Right cardiac atrium (tissue), 5 donors: ENCODE measurements at regions of chr17 and their contacts with region 1.

Region 1: GRCh38 chr17:79658811-79659207 is 48.0 kb upstream of the RBFOX3 start:
- DNase-seq: no peak
- ATAC-seq: peak in 1 of 2 donors; percentile 59
- H3K4me3 ChIP-seq: no peak overlapping the region
- H3K27ac ChIP-seq: no peak overlapping the region
- H3K4me1 ChIP-seq: no peaks in the 10 kb centered on the region
- H3K27me3 ChIP-seq: no peaks in the 10 kb centered on the region

Region 2: GRCh38 chr17:79589669-79590522 is 68.9 kb before region 1 on chr17:
- intact Hi-C with region 1: loop called in 1 of 4 experiments (anchors 10 kb)
- DNase-seq: peak in 1 of 3 donors; percentile 10
- ATAC-seq: no peak
- H3K4me3 ChIP-seq: no peak overlapping the region
- H3K27ac ChIP-seq: no peak overlapping the region
- H3K4me1 ChIP-seq: no peaks in the 10 kb centered on the region
- H3K27me3 ChIP-seq: no peaks in the 10 kb centered on the region